Activated T-helper 2 cell treated with anti-CD3 and anti-CD28 coated beads, Interferon-gamma antibody, Interleukin-2, Interleukin-4, amounts not matched to agents 10 μg/mL and 5 μg/mL and 100 μg/mL, durations not matched to agents 14 hours and 24 hours and 36 hours (primary cell): ENCODE measurements at regions of chr1 and their contacts with region 1.

Region 1: DNA sequence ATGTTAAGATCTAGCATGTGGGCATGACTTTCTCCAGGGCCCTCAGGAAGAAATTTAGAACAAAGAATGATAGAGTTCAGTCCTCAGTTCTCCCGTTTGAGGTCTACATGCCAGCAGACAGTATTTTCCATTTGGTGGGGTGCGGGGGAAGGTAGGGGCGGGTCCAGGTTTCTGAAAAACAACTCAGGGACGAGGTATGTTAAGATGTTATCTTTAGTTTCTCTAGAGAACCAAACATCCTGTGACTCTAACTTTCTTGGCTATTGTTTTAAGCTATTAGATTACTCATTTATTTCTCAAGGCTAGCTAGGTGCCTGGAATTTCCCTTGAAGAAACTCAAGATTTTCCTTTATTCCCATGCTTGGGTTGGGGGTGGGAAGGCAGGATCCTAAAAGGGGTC is 42.3 kb upstream of the SYT14 start:
- DNase-seq: no peak
- H3K4me3 Mint-ChIP-seq: no peak overlapping the region
- H3K27ac Mint-ChIP-seq: peak overlapping the region; percentile 70
- H3K4me1 Mint-ChIP-seq: peaks cover 16% of the 10 kb centered on the region
- H3K27me3 Mint-ChIP-seq: peaks cover 6% of the 10 kb centered on the region

Region 2: GRCh38 chr1:209884665-209885117 is 11.0 kb before region 1 on chr1:
- intact Hi-C with region 1: loop called (anchors 1 kb)
- DNase-seq: peak; percentile 22
- H3K4me3 Mint-ChIP-seq: no peak overlapping the region
- H3K27ac Mint-ChIP-seq: peak overlapping the region; percentile 46
- H3K4me1 Mint-ChIP-seq: peaks cover 16% of the 10 kb centered on the region
- H3K27me3 Mint-ChIP-seq: peaks cover 35% of the 10 kb centered on the region

Region 3: GRCh38 chr1:209989525-209989924 is 93.8 kb after region 1 on chr1:
- intact Hi-C with region 1: no loop called
- DNase-seq: no peak
- H3K4me3 Mint-ChIP-seq: no peak overlapping the region
- H3K27ac Mint-ChIP-seq: no peak overlapping the region
- H3K4me1 Mint-ChIP-seq: no peaks in the 10 kb centered on the region
- H3K27me3 Mint-ChIP-seq: peaks cover 12% of the 10 kb centered on the region